Activated B cell treated with CpG ODN at 0.5 μM for 24 hours (primary cell): ENCODE measurements at regions of chr14 and their contacts with region 1.

Region 1: GRCh38 chr14:56474419-56475022 is 105.1 kb upstream of the TMEM260 start:
- DNase-seq: no peak
- ATAC-seq: peak; percentile 47
- H3K4me3 Mint-ChIP-seq: no peak overlapping the region
- H3K27ac Mint-ChIP-seq: no peak overlapping the region
- H3K4me1 Mint-ChIP-seq: no peaks in the 10 kb centered on the region
- H3K27me3 Mint-ChIP-seq: no peaks in the 10 kb centered on the region
- CTCF ChIP-seq: peak; percentile 61

Region 2: DNA sequence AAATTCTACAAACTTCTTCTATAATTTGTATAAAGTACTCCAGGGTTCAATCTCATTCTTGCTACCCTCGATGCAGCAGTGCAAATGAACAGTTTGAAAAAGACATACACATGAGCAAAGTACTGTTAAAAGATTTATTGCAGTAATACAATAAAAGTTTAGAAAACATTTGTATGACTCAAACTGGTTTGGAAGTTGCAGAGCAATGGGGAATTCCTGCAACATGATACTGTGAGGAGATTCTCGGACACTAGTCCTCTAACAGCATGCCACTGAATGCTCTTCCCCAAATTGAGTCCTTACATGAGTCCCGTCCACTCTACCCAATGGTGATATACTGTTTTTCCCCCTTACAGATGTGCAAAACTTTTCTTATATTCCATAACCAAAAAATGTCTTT is 1108.2 kb before region 1 on chr14:
- CTCF ChIA-PET with region 1: no interaction called
- POLR2A ChIA-PET with region 1: no interaction called
- intact Hi-C with region 1: loop called (anchors 10 kb)
- DNase-seq: no peak
- ATAC-seq: no peak
- H3K4me3 Mint-ChIP-seq: no peak overlapping the region
- H3K27ac Mint-ChIP-seq: no peak overlapping the region
- H3K4me1 Mint-ChIP-seq: no peaks in the 10 kb centered on the region
- H3K27me3 Mint-ChIP-seq: no peaks in the 10 kb centered on the region
- CTCF ChIP-seq: no peak

Region 3: GRCh38 chr14:55446218-55446654 is 1028.3 kb before region 1 on chr14:
- CTCF ChIA-PET with region 1: interaction called, 51 read pairs
- POLR2A ChIA-PET with region 1: no interaction called
- intact Hi-C with region 1: loop called (anchors 1 kb)
- DNase-seq: no peak
- ATAC-seq: no peak
- H3K4me3 Mint-ChIP-seq: no peak overlapping the region
- H3K27ac Mint-ChIP-seq: no peak overlapping the region
- H3K4me1 Mint-ChIP-seq: no peaks in the 10 kb centered on the region
- H3K27me3 Mint-ChIP-seq: no peaks in the 10 kb centered on the region
- CTCF ChIP-seq: peak; percentile 37

Region 4: DNA sequence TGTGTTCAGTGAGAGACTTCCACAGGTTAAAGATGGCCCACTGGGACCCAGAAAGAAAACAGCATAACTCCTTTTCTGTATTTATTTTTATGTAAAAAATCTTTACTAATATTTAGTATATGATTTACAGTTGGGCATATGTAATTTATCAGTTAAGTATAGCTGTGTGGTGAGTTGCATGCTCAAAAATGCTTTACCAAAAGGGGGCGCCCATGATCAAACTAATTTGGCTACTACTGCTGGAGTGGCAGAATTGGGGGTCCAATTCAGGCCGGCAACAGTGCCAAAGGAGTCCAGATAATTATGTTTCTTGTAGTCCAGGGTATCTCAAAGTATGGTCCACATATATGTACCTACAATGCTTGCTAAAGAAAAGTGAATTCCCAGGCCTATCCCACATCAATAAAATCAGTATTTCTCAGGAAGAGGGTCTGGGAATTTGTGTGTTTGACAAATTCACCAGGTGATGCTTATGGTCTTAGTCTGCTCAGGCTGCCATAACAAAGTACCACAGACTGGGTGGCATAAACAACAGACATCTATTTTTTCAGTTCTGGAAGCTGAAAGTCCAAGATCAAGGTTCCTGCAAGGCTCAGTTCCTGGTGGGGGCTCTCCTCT is 742.5 kb before region 1 on chr14:
- CTCF ChIA-PET with region 1: interaction called, 37 read pairs
- POLR2A ChIA-PET with region 1: no interaction called
- intact Hi-C with region 1: loop called (anchors 1 kb)
- DNase-seq: no peak
- ATAC-seq: no peak
- H3K4me3 Mint-ChIP-seq: no peak overlapping the region
- H3K27ac Mint-ChIP-seq: no peak overlapping the region
- H3K4me1 Mint-ChIP-seq: no peaks in the 10 kb centered on the region
- H3K27me3 Mint-ChIP-seq: no peaks in the 10 kb centered on the region
- CTCF ChIP-seq: no peak

Region 5: DNA sequence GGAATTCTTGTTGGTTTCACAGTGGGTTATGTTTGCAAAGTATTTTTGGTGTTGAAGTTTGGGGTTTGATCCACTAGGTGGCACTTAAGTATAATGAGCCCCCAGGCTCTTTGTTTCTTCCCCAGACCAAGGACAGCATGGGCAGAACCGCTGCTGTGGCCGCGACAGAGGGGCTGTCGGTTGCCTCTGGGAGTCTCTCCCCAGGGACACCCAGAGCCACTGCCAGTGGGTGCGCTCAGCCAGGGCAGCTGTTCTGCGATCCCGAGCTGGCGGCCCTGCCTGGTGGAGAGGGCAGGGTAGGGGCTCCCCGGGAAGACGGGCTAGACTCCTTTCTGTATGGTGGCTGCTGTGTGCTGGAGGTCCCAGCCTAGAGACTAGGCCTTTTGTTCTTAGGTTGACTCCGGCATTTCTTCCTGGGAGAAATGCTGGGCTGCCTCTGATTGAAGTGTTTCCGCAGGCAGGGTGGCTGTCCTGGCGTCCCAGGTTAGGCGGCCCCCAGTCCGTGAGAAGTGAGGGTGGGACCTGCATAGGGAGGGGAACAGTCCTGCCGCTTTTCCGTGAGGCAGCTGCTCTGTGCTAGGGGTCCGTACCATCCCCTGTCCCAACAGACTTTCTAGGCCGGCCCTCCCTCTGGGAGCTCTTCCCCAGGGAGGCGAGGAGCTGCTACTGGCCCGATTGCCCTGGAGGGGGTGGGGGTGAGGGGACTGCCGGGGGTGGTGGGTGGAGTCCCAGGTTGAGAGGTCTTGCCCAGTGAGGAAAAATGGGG is 609.4 kb before region 1 on chr14:
- CTCF ChIA-PET with region 1: interaction called, 7 read pairs
- POLR2A ChIA-PET with region 1: no interaction called
- intact Hi-C with region 1: loop called (anchors 5 kb)
- DNase-seq: no peak
- ATAC-seq: no peak
- H3K4me3 Mint-ChIP-seq: no peak overlapping the region
- H3K27ac Mint-ChIP-seq: no peak overlapping the region
- H3K4me1 Mint-ChIP-seq: peaks cover 18% of the 10 kb centered on the region
- H3K27me3 Mint-ChIP-seq: peaks cover 10% of the 10 kb centered on the region
- CTCF ChIP-seq: no peak